ENCODE measurements at regions of chr20 and their contacts with region 1.

Region 1: DNA sequence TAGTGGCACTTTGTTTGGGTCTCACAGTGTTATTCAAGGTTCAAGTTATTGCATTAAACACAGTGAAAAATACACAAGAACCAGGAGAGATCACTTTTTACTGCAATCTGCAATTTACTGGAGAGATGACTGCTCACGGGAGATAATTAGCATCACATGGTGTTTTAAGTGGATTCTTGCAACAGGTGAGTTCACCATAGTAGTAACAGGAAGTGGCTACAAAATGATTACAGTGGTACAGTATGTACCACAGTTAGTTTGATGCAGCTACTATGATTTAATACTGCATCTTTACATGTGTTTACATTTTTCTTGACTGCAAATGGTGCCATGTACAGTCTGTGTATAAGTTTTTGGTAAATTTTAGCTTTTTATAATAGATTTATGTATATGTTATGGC is 96.5 kb upstream of the SCP2D1 start:
- DNase-seq: no peak
- H3K4me3 ChIP-seq: no peak overlapping the region
- H3K27ac ChIP-seq: no peak overlapping the region
- H3K4me1 ChIP-seq: no peaks in the 10 kb centered on the region
- H3K27me3 ChIP-seq: no peaks in the 10 kb centered on the region
- CTCF ChIP-seq: no peak
- POLR2A ChIP-seq: no peak

Region 2: DNA sequence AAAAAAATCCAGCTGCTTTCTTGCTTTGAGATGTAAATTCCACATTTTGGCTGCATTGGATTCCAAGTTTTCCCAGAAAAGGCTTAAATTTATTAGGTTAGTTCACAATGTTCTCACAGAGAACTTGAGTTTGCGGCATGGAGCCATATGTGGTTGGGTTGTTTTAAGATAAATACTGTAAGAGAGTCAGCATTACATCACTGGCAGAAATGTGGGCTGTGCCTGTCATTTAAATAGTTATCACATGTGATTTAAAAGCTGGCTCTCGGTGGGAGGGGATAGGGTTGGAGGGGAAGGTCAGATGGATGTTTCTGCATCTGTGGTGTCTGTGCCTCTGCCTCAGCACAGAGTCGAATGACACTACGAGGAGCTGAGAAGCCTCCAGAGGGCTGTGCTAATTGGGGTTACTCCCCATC is 22.7 kb after region 1 on chr20:
- intact Hi-C with region 1: no loop called
- DNase-seq: no peak
- H3K4me3 ChIP-seq: no peak overlapping the region
- H3K27ac ChIP-seq: peak overlapping the region in 1 of 2 donors; percentile 12
- H3K4me1 ChIP-seq: no peaks in the 10 kb centered on the region
- H3K27me3 ChIP-seq: no peaks in the 10 kb centered on the region
- CTCF ChIP-seq: no peak
- POLR2A ChIP-seq: no peak

Region 3: DNA sequence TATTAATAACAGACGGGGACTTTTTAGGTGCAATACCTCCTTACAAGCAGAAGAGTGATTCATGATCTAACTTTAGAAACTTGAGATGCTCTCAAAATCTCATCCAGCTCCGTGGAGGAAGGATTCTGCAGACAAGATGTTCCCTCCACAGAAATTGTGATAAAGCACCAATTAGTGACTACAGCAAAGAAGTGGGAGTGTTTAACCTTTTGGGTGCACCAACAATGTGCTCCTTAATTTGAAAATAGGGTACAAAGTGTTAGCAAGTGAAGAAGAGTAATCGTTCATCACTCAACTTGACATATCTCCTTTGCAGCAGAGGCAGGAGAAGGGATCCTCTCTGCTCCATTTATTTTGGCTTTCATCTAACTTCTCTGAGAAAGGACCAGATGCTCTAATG is 73.7 kb after region 1 on chr20:
- intact Hi-C with region 1: loop called (anchors 2 kb)
- DNase-seq: no peak
- H3K4me3 ChIP-seq: no peak overlapping the region
- H3K27ac ChIP-seq: no peak overlapping the region
- H3K4me1 ChIP-seq: peaks cover 0 to 4% of the 10 kb centered on the region in 2 donors
- H3K27me3 ChIP-seq: peaks cover 0 to 7% of the 10 kb centered on the region in 2 donors
- CTCF ChIP-seq: no peak
- POLR2A ChIP-seq: no peak

Region 4: DNA sequence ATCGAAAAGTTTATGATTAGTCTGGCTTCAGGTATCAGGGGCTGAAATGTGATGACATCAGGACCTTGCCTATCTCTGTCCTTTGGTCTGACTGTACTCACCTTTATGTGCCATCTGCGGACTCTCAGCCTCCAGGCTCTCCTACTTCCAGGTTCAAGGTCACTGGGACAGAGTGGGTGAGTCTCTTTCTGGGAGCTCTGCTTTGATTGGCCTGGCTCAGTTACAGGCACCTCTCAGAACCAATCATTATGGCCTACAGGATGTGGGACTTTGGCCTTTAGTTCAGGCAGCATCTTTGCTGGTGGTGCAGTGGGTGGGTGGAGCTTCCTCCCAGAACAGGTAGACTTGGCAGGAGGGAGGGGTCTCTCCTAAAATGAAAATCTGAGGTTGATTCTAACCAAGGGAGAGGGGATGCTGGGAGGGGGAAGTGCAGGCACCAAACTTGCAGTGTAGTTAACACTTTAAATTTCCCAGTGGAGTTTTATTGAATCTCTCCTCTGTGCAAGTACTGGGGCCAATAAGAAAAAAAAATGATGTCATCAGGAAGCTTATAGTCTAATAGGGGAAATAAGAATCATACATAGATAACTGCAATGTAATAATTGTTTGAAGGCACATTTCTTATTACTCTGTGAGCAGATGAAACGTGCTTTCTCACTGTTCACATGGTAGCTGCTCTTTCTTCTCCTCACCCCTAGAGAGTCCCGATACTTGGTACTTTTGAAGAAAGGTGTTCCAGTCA is 548.7 kb after region 1 on chr20:
- intact Hi-C with region 1: no loop called
- DNase-seq: no peak
- H3K4me3 ChIP-seq: no peak overlapping the region
- H3K27ac ChIP-seq: no peak overlapping the region
- H3K4me1 ChIP-seq: no peaks in the 10 kb centered on the region
- H3K27me3 ChIP-seq: no peaks in the 10 kb centered on the region
- CTCF ChIP-seq: no peak
- POLR2A ChIP-seq: no peak

Region 5: DNA sequence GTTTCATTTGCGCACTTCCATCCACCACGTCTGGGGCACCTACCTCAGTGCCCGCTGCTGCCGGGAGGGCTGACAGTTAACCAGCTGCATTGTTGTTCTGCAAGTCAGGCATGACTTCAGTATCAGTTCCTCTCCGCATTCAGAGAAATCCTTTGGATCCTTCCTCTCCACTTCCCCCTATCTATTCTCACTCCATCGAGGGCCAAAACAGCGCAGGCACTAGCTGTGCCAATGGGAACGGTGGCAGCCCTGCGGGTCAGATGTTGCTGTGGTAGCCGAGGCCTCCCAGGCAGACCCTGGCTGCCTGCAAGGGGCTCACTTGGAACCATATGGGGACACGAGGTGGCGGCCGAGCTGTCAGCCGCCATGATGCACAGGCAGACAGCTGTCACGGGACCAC is 1586.7 kb after region 1 on chr20:
- intact Hi-C with region 1: no loop called
- DNase-seq: no peak
- H3K4me3 ChIP-seq: no peak overlapping the region
- H3K27ac ChIP-seq: no peak overlapping the region
- H3K4me1 ChIP-seq: no peaks in the 10 kb centered on the region
- H3K27me3 ChIP-seq: no peaks in the 10 kb centered on the region
- CTCF ChIP-seq: no peak
- POLR2A ChIP-seq: no peak